Activated T-helper 1 cell treated with anti-CD3 and anti-CD28 coated beads, Interleukin-12 subunit alpha, Interleukin-12 subunit beta, Interleukin-2, Interleukin-4 antibody, amounts not matched to agents 30 ng/mL and 10 ng/mL and 1 ng/mL, durations not matched to agents 14 hours and 24 hours and 36 hours (primary cell): ENCODE measurements at regions of chr1 and their contacts with region 1.

Region 1: DNA sequence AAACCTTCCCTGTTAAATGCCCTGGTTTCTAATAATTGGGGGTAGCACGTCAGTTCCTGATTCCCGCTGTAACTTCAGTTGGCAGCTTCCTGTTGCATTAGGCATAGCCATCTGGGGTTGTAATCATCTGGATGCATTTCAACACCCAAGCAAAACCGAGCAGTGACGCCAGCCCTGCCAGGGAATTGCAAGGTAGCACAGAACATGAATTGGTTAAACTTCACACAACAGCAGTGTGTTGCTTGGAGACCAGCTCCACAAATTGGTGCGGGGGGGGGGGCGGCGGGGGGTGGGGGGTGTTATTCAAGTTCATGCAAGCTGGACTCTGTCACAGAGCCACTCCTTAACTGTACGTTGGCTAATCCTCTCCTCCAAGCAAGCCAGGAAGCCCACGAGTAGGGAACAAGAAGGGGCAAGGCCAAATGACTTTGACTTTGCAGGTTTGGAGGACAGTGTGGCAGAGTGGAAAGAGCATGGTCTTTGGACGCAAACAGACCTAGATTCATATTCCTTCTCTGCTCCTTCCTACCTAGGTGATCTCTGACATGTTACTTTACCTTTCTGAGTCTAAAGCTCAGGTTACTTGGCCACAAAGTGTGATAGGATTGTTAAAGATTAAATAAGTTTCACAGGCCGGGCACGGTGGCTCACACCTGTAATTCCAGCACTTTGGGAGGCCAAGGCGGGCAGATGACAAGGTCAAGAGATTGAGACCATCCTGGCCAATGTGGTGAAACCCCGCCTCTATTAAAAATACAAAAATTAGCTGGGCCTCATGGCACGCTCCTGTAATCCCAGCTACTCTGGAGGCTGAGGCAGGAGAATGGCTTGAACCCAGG is 4.7 kb downstream of the LAX1 start:
- DNase-seq: no peak
- H3K4me3 Mint-ChIP-seq: no peak overlapping the region
- H3K27ac Mint-ChIP-seq: no peak overlapping the region
- H3K4me1 Mint-ChIP-seq: peaks cover 27% of the 10 kb centered on the region
- H3K27me3 Mint-ChIP-seq: no peaks in the 10 kb centered on the region

Region 2: DNA sequence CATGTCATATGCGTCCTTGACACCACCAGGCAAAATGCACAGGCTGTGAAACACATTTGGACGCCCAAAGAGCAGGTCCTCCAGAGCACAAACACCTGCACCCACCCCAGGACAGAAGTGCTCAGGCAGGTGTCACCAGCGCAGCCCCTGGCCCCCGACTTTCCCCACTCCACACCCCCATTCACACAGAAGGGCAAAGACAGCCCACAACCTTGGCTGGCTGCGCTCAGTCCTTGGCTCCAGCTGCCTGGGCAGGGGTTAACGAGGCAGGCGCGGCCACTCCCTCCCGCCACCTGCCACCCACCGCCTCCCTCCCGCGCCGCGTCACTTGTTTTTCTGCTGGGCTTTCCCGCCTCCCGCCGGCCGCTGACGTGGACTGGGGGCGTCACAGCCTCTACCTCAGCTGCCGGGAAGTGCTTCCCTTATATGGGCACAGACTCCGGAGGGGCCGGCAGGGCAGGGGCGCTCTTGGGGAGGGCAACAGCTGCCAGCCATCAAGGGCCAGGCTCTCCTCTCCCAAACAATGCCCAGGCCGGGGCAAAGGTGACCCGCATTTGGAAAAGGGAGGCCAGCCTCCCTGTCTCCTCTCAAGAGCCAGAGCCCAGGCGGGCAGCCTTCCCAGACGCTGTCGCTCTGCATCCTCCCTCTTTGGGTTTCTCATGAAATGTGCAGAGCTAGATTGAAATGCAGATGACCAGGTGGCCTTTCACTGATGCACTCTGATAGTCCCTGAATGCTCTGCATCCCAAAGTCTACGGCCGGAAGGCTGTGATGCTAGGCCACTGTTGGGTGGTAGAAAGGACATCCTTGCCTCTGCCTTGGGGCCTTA is 479.2 kb before region 1 on chr1:
- intact Hi-C with region 1: loop called (anchors 5 kb)
- DNase-seq: peak; percentile 96
- H3K4me3 Mint-ChIP-seq: peak overlapping the region; percentile 83
- H3K27ac Mint-ChIP-seq: peak overlapping the region; percentile 99
- H3K4me1 Mint-ChIP-seq: peaks cover 89% of the 10 kb centered on the region
- H3K27me3 Mint-ChIP-seq: no peaks in the 10 kb centered on the region

Region 3: GRCh38 chr1:203612932-203613682 is 156.6 kb before region 1 on chr1:
- intact Hi-C with region 1: loop called (anchors 5 kb)
- DNase-seq: no peak
- H3K4me3 Mint-ChIP-seq: no peak overlapping the region
- H3K27ac Mint-ChIP-seq: peak overlapping the region; percentile 74
- H3K4me1 Mint-ChIP-seq: peaks cover 57% of the 10 kb centered on the region
- H3K27me3 Mint-ChIP-seq: no peaks in the 10 kb centered on the region

Region 4: DNA sequence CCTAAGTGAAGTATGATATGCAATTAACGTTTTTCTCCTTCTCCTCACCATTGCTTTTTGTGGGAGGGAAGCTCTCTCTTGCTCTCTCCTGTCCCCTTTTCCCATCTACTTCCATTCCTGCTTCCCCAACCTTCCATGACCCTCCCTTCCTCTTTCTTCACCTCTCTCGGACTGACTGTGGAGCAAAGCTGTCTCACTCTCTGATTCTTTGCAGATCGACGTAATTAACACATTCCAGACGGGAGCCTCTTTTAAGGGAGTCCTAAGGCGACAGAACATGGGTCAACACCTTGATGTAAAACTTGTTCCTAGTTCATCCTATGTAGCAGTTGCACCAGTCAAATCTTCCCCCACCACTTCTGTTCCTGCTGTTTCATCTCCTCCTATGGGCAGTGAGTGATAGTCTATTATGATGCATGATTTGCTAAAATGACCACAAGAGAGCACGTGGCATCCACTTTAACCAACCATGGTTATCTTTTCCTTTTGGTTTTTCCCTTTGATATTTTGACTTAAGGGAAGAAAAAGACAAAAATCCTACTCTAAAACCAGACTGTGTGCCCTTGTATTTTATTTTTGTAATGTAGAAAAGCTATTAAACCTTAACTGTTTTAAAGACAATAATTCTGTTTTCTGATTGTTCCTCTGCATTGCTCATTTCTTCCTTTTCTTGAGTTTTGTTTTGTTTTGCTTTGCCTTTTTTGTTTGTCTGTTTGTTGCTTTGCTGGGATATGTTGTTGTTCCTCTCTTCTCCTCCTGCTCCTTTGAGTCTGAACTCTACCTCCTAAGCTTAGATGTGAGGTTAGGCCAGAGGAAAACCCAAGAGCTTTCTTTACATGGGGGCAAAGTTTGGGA is 36.5 kb before region 1 on chr1:
- intact Hi-C with region 1: loop called (anchors 5 kb)
- DNase-seq: no peak
- H3K4me3 Mint-ChIP-seq: no peak overlapping the region
- H3K27ac Mint-ChIP-seq: no peak overlapping the region
- H3K4me1 Mint-ChIP-seq: no peaks in the 10 kb centered on the region
- H3K27me3 Mint-ChIP-seq: no peaks in the 10 kb centered on the region

Region 5: GRCh38 chr1:203754455-203754864 is 15.3 kb before region 1 on chr1:
- intact Hi-C with region 1: loop called (anchors 1 kb)
- DNase-seq: no peak
- H3K4me3 Mint-ChIP-seq: peak overlapping the region; percentile 53
- H3K27ac Mint-ChIP-seq: peak overlapping the region; percentile 93
- H3K4me1 Mint-ChIP-seq: peaks cover 30% of the 10 kb centered on the region
- H3K27me3 Mint-ChIP-seq: no peaks in the 10 kb centered on the region

Region 6: GRCh38 chr1:203861379-203862184 is 91.9 kb after region 1 on chr1 and contains the start of gene SNRPE:
- intact Hi-C with region 1: loop called (anchors 1 kb)
- DNase-seq: peak; percentile 96
- H3K4me3 Mint-ChIP-seq: peak within 1 kb of the TSS; percentile 100
- H3K27ac Mint-ChIP-seq: peak within 1 kb of the TSS; percentile 98
- H3K4me1 Mint-ChIP-seq: peaks cover 25% of the 10 kb centered on the region
- H3K27me3 Mint-ChIP-seq: no peaks in the 10 kb centered on the region
- total RNA-seq, gene SNRPE: 250 and 270 TPM in 2 replicates